ENCODE measurements at regions of chr7 and their contacts with region 1.

Region 1: GRCh38 chr7:140479062-140479738 is at the start of gene MKRN1:
- DNase-seq: peak; percentile 85 to 93 (median 90)
- ATAC-seq: peak; percentile 87 to 92 (median 89)
- H3K4me3 ChIP-seq: peak within 1 kb of the TSS; percentile 71 to 87
- H3K4me3 Mint-ChIP-seq: peak within 1 kb of the TSS; percentile 98 to 99 (median 99)
- H3K27ac ChIP-seq: peak within 1 kb of the TSS; percentile 79
- H3K27ac Mint-ChIP-seq: peak within 1 kb of the TSS; percentile 98 to 99
- H3K4me1 ChIP-seq: peaks cover 17 to 32% of the 10 kb centered on the region in 2 experiments
- H3K4me1 Mint-ChIP-seq: peaks cover 19 to 30% (median 29%) of the 10 kb centered on the region in 3 donors
- H3K27me3 ChIP-seq: no peaks in the 10 kb centered on the region
- H3K27me3 Mint-ChIP-seq: no peaks in the 10 kb centered on the region
- total RNA-seq, gene MKRN1: 108 to 146 (median 137) TPM

Region 2: GRCh38 chr7:139875821-139876241 is 603.4 kb before region 1 on chr7:
- CTCF ChIA-PET with region 1: no interaction called
- POLR2A ChIA-PET with region 1: interaction called in 1 of 2 experiments, 10 read pairs
- DNase-seq: peak in 2 of 35 experiments; percentile 7 to 17
- ATAC-seq: no peak
- H3K4me3 ChIP-seq: no peak overlapping the region
- H3K4me3 Mint-ChIP-seq: no peak overlapping the region
- H3K27ac ChIP-seq: no peak overlapping the region
- H3K27ac Mint-ChIP-seq: no peak overlapping the region
- H3K4me1 ChIP-seq: no peaks in the 10 kb centered on the region
- H3K4me1 Mint-ChIP-seq: peaks cover 0 to 4% (median 0%) of the 10 kb centered on the region in 3 donors
- H3K27me3 ChIP-seq: no peaks in the 10 kb centered on the region
- H3K27me3 Mint-ChIP-seq: no peaks in the 10 kb centered on the region

Region 3: GRCh38 chr7:140084972-140085371 is 394.2 kb before region 1 on chr7:
- CTCF ChIA-PET with region 1: no interaction called
- POLR2A ChIA-PET with region 1: interaction called in 1 of 2 experiments, 10 read pairs
- DNase-seq: peak in 12 of 35 experiments; percentile 7 to 36 (median 21)
- ATAC-seq: peak in 3 of 4 experiments; percentile 53 to 69 (median 62)
- H3K4me3 ChIP-seq: no peak overlapping the region
- H3K4me3 Mint-ChIP-seq: peak overlapping the region; percentile 0 to 2 (median 1)
- H3K27ac ChIP-seq: peak overlapping the region; percentile 42
- H3K27ac Mint-ChIP-seq: peak overlapping the region; percentile 62 to 75
- H3K4me1 ChIP-seq: peaks cover 0 to 10% of the 10 kb centered on the region in 2 experiments
- H3K4me1 Mint-ChIP-seq: peaks cover 32 to 51% (median 39%) of the 10 kb centered on the region in 3 donors
- H3K27me3 ChIP-seq: no peaks in the 10 kb centered on the region
- H3K27me3 Mint-ChIP-seq: no peaks in the 10 kb centered on the region

Region 4: DNA sequence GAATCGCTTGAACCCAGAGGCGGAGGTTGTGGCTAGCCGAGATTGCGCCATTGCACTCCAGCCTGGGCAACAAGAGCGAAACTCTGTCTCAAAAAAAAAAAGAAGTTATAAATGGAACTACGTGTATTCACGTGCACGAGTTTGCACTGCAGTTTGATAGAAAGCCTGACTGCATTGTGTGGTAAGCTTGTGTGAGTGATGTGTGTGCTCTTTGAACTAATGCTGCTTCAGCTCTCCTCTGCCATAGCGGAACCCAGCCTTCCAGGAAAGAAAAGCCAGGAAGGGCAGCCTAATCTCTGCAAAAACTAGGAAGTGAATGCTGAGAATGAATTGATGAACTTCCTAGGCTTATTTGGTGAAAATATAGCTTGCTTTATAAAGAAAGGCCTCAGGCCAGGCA is 15.7 kb after region 1 on chr7:
- CTCF ChIA-PET with region 1: interaction called, 28 to 44 read pairs
- POLR2A ChIA-PET with region 1: interaction called, 3 to 5 read pairs
- DNase-seq: no peak
- ATAC-seq: no peak
- H3K4me3 ChIP-seq: no peak overlapping the region
- H3K4me3 Mint-ChIP-seq: no peak overlapping the region
- H3K27ac ChIP-seq: no peak overlapping the region
- H3K27ac Mint-ChIP-seq: no peak overlapping the region
- H3K4me1 ChIP-seq: no peaks in the 10 kb centered on the region
- H3K4me1 Mint-ChIP-seq: peaks cover 0 to 2% (median 0%) of the 10 kb centered on the region in 3 donors
- H3K27me3 ChIP-seq: no peaks in the 10 kb centered on the region
- H3K27me3 Mint-ChIP-seq: no peaks in the 10 kb centered on the region

Region 5: GRCh38 chr7:140512317-140513000 is 33.3 kb after region 1 on chr7:
- CTCF ChIA-PET with region 1: no interaction called
- POLR2A ChIA-PET with region 1: no interaction called
- DNase-seq: no peak
- ATAC-seq: no peak
- H3K4me3 ChIP-seq: no peak overlapping the region
- H3K4me3 Mint-ChIP-seq: no peak overlapping the region
- H3K27ac ChIP-seq: no peak overlapping the region
- H3K27ac Mint-ChIP-seq: no peak overlapping the region
- H3K4me1 ChIP-seq: no peaks in the 10 kb centered on the region
- H3K4me1 Mint-ChIP-seq: no peaks in the 10 kb centered on the region
- H3K27me3 ChIP-seq: peaks cover 0 to 15% of the 10 kb centered on the region in 2 experiments
- H3K27me3 Mint-ChIP-seq: peaks cover 0 to 5% of the 10 kb centered on the region in 2 donors

Region 6: GRCh38 chr7:141014524-141015395 is 535.6 kb after region 1 on chr7 and contains the start of gene MRPS33:
- CTCF ChIA-PET with region 1: interaction called, 3 to 32 read pairs
- POLR2A ChIA-PET with region 1: interaction called in 1 of 2 experiments, 3 read pairs
- DNase-seq: peak; percentile 87 to 97 (median 94)
- ATAC-seq: peak; percentile 95 to 99 (median 98)
- H3K4me3 ChIP-seq: peak within 1 kb of the TSS; percentile 66 to 85
- H3K4me3 Mint-ChIP-seq: peak within 1 kb of the TSS; percentile 82 to 98 (median 96)
- H3K27ac ChIP-seq: peak within 1 kb of the TSS; percentile 98
- H3K27ac Mint-ChIP-seq: peak within 1 kb of the TSS; percentile 98 to 100
- H3K4me1 ChIP-seq: peaks cover 10 to 13% of the 10 kb centered on the region in 2 experiments
- H3K4me1 Mint-ChIP-seq: peaks cover 36 to 42% (median 39%) of the 10 kb centered on the region in 3 donors
- H3K27me3 ChIP-seq: peaks cover 0 to 3% of the 10 kb centered on the region in 2 experiments
- H3K27me3 Mint-ChIP-seq: peaks cover 5 to 13% of the 10 kb centered on the region in 2 donors
- total RNA-seq, gene MRPS33: 24.2 to 45.5 (median 38.6) TPM

Measured in T-cell (primary cell).